Lower lobe of right lung (tissue), 2 donors: ENCODE measurements at regions of chr22 and their contacts with region 1.

Region 1: DNA sequence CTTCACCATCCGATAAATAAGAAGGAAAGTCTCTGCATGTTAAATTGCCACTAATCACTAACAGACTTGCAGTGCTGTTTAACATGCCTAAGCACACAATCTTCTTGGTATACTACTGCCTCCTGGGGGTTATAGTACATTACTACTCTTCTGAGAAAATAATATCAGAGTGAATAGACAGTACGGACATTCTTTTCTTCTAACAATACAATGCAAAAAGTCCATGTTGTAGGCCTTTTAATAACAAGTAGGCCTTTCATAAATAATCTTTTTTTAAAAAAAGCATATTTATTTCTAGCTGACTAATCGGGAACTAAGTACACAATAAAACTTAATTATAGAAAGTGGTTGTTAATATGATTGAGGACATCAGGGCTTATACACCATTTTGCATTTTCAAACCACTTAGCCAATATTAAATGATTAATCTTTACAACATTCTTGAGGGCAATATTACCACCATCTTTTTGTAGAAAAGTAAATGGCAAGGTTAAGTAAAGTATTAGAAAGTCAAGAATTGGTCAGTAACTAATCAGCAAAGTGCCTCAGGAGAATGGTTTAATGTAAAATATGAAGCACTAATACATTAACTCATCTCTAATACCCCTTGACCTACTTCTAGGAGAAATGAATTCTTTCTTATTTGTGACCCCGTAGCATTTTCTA is 84.7 kb downstream of the TTC28 start:
- DNase-seq: no peak
- ATAC-seq: peak; percentile 85 to 87
- H3K4me3 ChIP-seq: no peak overlapping the region
- H3K27ac ChIP-seq: no peak overlapping the region
- H3K4me1 ChIP-seq: no peaks in the 10 kb centered on the region
- H3K27me3 ChIP-seq: no peaks in the 10 kb centered on the region
- CTCF ChIP-seq: peak; percentile 74

Region 2: DNA sequence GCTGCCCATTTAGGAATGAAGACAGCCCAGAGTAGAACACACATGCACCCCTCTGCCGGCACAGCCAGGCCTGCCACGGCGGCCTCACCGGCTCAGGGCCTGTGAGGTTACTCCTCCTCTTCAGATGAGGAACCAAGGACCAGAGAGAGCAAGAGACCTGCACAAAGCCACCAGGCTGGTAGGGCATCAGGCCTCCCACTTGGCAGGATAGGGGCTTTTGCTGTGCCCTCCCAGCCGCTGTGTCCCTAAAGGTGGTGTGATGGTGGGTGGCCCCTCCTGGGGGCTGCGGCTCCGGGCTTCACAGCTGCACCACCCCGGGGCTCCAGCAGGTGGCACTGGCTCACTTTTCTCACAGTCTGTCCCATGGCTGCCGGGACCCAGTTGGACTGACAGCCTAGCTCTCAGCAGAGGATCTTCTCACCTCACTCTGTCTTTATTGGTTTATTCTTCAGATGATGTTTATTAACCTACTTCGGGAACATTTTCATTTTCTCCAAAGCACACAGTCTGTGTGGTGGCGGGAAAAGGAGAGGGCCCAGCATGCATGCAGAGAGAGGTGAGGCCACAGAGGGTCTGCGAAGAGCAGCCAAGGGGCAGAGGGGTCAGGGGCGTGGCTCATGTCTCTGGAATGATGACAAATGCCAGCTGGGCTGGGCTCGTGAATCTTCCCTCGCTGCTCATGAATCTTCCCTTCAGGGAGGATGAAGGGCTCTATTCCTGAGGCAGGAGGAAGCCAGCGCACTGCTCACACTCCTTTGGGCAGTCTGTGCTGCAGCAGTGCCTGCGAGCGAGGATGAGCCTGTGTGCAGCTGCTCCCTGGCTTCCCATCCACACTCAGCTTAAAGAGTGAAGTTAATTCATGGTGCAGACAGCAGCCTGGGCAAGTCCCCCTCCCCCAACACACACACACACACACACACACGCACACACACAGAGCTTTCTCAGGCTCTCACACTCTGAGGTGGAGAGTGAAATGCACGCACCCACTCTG is 574.8 kb before region 1 on chr22:
- intact Hi-C with region 1: loop called (anchors 10 kb)
- DNase-seq: peak; percentile 73
- ATAC-seq: peak; percentile 84 to 85
- H3K4me3 ChIP-seq: no peak overlapping the region
- H3K27ac ChIP-seq: peak overlapping the region; percentile 36
- H3K4me1 ChIP-seq: peaks cover 30% of the 10 kb centered on the region
- H3K27me3 ChIP-seq: no peaks in the 10 kb centered on the region
- CTCF ChIP-seq: peak; percentile 94

Region 3: GRCh38 chr22:28051787-28052356 is 543.1 kb before region 1 on chr22:
- intact Hi-C with region 1: loop called (anchors 10 kb)
- DNase-seq: no peak
- ATAC-seq: peak; percentile 63 to 74
- H3K4me3 ChIP-seq: no peak overlapping the region
- H3K27ac ChIP-seq: peak overlapping the region; percentile 8
- H3K4me1 ChIP-seq: peaks cover 32% of the 10 kb centered on the region
- H3K27me3 ChIP-seq: no peaks in the 10 kb centered on the region
- CTCF ChIP-seq: peak; percentile 86

Region 4: DNA sequence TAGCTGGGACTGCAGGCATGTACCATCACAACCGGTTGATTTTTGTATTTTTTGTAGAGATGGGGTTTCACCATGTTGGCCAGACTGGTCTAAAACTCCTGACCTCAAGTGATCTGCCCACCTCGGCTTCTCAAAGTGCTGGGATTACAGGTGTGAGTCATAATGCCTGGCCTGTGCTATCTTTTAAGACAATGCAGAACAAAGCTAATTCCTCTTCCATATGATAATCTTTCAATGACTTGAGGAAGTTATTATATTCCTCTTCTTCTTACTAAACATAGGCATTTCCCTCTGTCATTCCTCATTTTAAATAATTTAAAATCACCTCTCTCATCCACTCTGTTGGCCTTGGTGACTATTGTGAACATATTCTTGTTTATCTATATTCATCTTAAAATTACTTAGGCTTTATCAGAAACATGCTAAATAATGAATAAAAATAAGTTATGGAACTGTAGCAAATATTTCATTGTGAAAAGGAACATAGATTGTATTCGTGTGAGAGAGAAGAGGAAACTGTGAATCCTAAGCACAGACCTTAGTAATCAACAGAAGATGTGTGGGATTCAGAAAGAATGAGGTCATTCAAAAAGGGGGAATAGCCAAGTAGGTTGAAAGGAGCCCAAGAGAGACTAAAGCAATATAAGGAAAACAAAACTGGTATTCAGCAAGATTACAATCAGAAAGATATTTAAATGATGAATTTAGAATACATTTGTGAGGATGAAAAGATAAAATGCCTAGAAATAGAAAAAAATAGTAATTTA is 184.7 kb before region 1 on chr22:
- intact Hi-C with region 1: no loop called
- DNase-seq: no peak
- ATAC-seq: peak in 1 of 2 donors; percentile 45
- H3K4me3 ChIP-seq: no peak overlapping the region
- H3K27ac ChIP-seq: no peak overlapping the region
- H3K4me1 ChIP-seq: peaks cover 22% of the 10 kb centered on the region
- H3K27me3 ChIP-seq: no peaks in the 10 kb centered on the region
- CTCF ChIP-seq: no peak

Region 5: DNA sequence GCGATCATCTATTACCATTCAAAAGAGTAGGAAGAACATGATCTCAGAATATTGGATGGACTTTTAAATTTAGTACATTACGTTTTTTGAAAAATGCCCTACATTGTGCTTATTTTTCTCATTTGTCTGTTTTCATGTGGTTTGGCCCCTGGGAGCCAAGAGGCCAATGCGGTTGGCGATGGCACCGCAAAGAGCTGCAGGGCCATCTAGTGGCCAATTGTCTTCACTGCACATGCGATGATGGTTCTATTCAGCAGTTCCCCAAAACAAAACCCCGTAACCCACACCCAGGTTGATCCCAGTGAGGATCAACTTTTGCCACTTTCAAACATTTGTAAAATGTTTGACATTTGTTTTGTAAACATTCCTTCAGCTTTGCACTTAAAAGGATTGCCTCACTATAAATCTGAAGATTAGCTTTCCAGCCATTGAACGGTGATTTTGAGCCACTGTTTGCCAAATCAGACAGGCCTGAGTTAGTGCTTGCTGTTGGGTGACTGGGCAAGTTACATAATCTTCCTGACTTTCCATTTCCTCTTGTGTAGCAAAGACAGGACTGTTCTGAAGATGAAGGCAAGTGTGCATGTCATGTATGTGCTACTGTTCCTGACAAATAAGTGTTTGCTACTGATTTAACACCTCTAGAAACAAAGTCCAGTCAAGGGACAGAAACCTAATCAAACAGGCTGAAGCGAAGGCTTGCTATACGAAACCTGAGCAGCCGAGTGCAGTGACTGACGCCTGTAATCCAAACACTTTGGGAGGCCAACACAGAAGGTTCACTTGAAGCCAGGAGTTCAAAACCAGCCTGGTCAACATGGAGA is 234.6 kb after region 1 on chr22:
- intact Hi-C with region 1: loop called (anchors 5 kb)
- DNase-seq: peak; percentile 81
- ATAC-seq: peak; percentile 96
- H3K4me3 ChIP-seq: no peak overlapping the region
- H3K27ac ChIP-seq: peak overlapping the region; percentile 48
- H3K4me1 ChIP-seq: peaks cover 14% of the 10 kb centered on the region
- H3K27me3 ChIP-seq: no peaks in the 10 kb centered on the region
- CTCF ChIP-seq: peak; percentile 99